ENCODE measurements at regions of chr9 and their contacts with region 1.

Region 1: GRCh38 chr9:72691671-72692070 is 170.3 kb downstream of the TMC1 start:
- DNase-seq: no peak
- ATAC-seq: no peak
- H3K4me3 ChIP-seq: no peak overlapping the region
- H3K27ac ChIP-seq: no peak overlapping the region
- H3K4me1 ChIP-seq: no peaks in the 10 kb centered on the region
- H3K27me3 ChIP-seq: no peaks in the 10 kb centered on the region

Region 2: GRCh38 chr9:72743836-72744235 is 52.2 kb after region 1 on chr9:
- intact Hi-C with region 1: loop called in 1 of 4 experiments (anchors 5 kb)
- DNase-seq: no peak
- ATAC-seq: no peak
- H3K4me3 ChIP-seq: no peak overlapping the region
- H3K27ac ChIP-seq: no peak overlapping the region
- H3K4me1 ChIP-seq: no peaks in the 10 kb centered on the region
- H3K27me3 ChIP-seq: no peaks in the 10 kb centered on the region